Endothelial cell of umbilical vein (primary cell): ENCODE measurements at regions of chr13 and their contacts with region 1.

Region 1: DNA sequence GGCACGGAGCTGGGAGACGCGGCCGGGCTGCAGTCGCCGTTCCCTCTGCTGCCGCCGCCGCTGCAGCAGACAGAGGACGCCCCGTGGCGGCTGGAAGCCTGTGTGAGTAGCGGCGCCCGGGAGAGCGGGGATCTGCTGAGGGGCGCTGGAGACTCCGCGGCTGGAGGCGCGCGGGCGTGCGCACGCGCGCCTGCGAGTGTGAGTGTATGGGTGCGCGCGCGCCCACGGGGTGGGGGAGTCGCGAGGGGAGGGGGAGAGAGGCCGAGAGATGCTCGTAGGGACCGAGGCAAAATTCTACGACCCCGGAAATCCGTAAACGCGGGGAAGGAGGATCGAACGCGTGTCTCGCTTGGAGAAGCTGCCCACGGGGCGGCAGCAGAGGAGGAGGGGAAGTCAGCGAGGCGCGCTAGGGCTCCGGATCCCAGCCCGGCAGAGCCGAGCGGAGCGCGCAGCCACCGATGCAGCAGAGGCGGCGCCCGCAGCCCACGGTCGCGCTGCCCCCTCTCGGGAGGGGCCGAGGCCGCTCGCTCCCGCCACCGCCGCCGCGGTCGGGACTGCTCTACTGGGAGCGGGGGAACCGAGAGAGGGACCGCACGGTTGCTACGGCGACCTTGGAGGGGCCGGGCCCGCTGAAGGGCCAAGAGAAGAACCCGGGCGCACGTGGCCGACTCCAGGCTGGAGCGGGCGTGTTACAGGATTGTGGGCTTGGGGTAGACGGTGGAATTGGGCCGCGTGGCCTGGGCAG is at the start of gene ENOX1:
- DNase-seq: peak; percentile 45
- H3K4me3 ChIP-seq: peak within 1 kb of the TSS; percentile 47 to 51 (median 48)
- H3K27ac ChIP-seq: no peak within 1 kb of the TSS
- H3K4me1 ChIP-seq: peaks cover 18% of the 10 kb centered on the region
- H3K27me3 ChIP-seq: peaks cover 0 to 2% of the 10 kb centered on the region in 2 experiments
- CTCF ChIP-seq: peak in 1 of 2 donors; percentile 8
- POLR2A ChIP-seq: no peak
- total RNA-seq, gene ENOX1: 0.28 and 0.97 TPM in 2 replicates

Region 2: DNA sequence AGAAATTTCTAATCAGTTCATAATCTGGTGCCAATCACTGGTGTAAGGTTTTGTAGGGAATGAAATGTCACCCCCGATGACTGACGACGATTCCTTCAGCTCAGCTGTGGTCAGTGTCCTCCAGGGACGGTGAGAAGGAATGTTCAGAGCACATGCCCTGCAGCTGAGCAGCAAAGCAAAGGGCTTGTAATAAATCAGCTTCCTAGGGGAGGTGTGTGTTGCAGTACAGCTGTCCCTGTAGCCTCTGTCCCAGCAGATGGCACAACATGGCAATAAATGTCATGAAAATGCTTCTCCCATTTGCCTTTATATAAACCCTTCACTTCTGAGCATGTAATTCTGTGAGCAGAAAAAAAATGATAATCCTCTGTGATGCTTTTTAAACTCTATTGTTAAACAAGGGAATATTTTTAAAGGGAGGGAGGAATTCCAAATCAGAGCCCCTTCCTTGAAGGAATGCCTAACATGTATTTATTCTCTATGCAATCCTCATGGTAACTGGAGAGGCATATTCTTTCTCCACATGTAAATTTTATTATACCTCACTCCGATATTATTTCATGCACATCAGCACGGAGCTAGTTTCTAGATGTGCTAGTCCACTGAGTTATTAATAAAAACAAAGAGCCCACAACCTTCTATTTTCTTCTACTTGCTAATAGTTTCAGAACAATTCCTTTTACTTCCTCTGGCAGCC is 903.0 kb before region 1 on chr13:
- CTCF ChIA-PET with region 1: no interaction called
- POLR2A ChIA-PET with region 1: no interaction called
- dilution Hi-C with region 1: no loop called
- intact Hi-C with region 1: loop called (anchors 5 kb)
- DNase-seq: peak; percentile 68
- H3K4me3 ChIP-seq: no peak overlapping the region
- H3K27ac ChIP-seq: no peak overlapping the region
- H3K4me1 ChIP-seq: peaks cover 7% of the 10 kb centered on the region
- H3K27me3 ChIP-seq: peaks cover 0 to 2% of the 10 kb centered on the region in 2 experiments
- CTCF ChIP-seq: peak in 1 of 2 donors; percentile 3
- POLR2A ChIP-seq: no peak

Region 3: DNA sequence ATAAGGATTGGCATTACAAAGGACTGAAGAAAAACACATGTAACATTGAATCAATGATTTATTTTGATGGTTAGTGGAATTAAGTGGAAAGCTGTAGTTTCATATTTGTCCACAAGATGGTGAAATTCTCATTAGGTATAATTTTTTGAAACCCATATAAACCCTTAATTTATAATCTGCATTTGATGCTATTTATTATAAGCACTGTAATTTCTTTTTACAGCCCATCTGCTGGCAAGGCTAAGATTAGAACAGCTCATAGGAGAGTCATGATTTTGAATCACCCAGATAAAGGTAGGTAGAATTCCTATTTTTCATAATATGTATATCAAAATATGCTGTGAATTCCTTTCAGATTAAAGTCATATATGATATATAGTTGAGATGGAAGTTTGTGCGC is 701.4 kb before region 1 on chr13:
- CTCF ChIA-PET with region 1: interaction called, 9 read pairs
- POLR2A ChIA-PET with region 1: no interaction called
- dilution Hi-C with region 1: no loop called
- intact Hi-C with region 1: loop called (anchors 1 kb)
- DNase-seq: peak; percentile 59
- H3K4me3 ChIP-seq: no peak overlapping the region
- H3K27ac ChIP-seq: no peak overlapping the region
- H3K4me1 ChIP-seq: peaks cover 3% of the 10 kb centered on the region
- H3K27me3 ChIP-seq: no peaks in the 10 kb centered on the region
- CTCF ChIP-seq: peak in 1 of 2 donors; percentile 35
- POLR2A ChIP-seq: no peak

Region 4: GRCh38 chr13:43368003-43368402 is 418.9 kb before region 1 on chr13:
- CTCF ChIA-PET with region 1: no interaction called
- POLR2A ChIA-PET with region 1: no interaction called
- dilution Hi-C with region 1: no loop called
- intact Hi-C with region 1: loop called (anchors 5 kb)
- DNase-seq: peak; percentile 37
- H3K4me3 ChIP-seq: no peak overlapping the region
- H3K27ac ChIP-seq: no peak overlapping the region
- H3K4me1 ChIP-seq: peaks cover 21% of the 10 kb centered on the region
- H3K27me3 ChIP-seq: no peaks in the 10 kb centered on the region
- CTCF ChIP-seq: no peak
- POLR2A ChIP-seq: no peak